ENCODE measurements at regions of chr17 and their contacts with region 1.

Region 1: DNA sequence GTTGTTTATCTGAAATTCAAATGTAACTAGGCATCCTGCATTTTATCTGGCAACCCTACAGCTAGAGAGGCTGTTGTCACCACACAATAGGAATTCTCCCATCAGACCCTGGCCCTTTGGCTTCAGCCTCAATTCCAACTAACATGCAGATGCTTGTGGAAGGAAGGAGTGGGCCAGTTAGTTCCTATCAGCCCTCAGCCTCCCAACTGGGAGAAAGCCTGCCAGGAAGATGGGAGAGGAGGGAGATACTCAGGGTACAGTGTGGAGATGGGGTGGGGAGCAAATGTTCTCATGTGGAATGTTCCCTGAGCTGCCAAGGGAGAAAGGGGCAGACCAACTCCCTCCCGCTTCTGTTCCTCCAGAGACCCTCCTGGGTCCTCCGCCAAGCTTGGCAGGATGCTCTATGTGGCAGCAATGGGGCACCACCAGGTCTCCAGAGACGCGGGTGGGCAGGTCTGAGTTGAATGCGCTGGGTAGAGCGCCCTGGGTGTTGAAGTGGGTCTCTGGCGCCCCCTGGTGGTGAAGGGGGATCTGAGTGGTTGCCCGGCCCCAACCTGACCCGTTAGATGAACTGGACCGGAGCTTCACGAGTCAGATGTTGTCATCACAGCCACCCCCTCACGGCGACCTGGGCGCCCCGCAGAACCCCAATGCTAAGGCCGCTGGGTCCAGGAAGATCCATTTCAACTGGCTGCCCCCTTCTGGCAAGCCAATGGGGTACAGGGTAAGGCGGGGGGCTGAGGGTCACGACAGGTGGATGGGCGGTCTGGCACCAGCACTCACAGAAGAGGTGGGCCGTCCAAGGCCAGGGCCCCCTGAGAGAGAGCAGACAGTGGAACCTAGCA is 15.2 kb downstream of the GALK1 start:
- DNase-seq: peak; percentile 92
- H3K4me3 Mint-ChIP-seq: no peak overlapping the region
- H3K27ac Mint-ChIP-seq: no peak overlapping the region
- H3K4me1 Mint-ChIP-seq: peaks cover 20% of the 10 kb centered on the region
- H3K27me3 Mint-ChIP-seq: peaks cover 33% of the 10 kb centered on the region

Region 2: GRCh38 chr17:75539967-75540711 is 209.6 kb before region 1 on chr17:
- CTCF ChIA-PET with region 1: no interaction called
- DNase-seq: no peak
- H3K4me3 Mint-ChIP-seq: no peak overlapping the region
- H3K27ac Mint-ChIP-seq: no peak overlapping the region
- H3K4me1 Mint-ChIP-seq: peaks cover 13% of the 10 kb centered on the region
- H3K27me3 Mint-ChIP-seq: no peaks in the 10 kb centered on the region

Region 3: GRCh38 chr17:75601057-75602051 is 148.4 kb before region 1 on chr17:
- CTCF ChIA-PET with region 1: interaction called, 53 read pairs
- DNase-seq: peak; percentile 78
- H3K4me3 Mint-ChIP-seq: no peak overlapping the region
- H3K27ac Mint-ChIP-seq: no peak overlapping the region
- H3K4me1 Mint-ChIP-seq: no peaks in the 10 kb centered on the region
- H3K27me3 Mint-ChIP-seq: peaks cover 6% of the 10 kb centered on the region

Region 4: GRCh38 chr17:75632863-75633485 is 116.8 kb before region 1 on chr17 and contains the start of gene SMIM5:
- CTCF ChIA-PET with region 1: interaction called, 380 read pairs
- DNase-seq: peak; percentile 91
- H3K4me3 Mint-ChIP-seq: no peak within 1 kb of the TSS
- H3K27ac Mint-ChIP-seq: no peak within 1 kb of the TSS
- H3K4me1 Mint-ChIP-seq: no peaks in the 10 kb centered on the region
- H3K27me3 Mint-ChIP-seq: no peaks in the 10 kb centered on the region

Region 5: GRCh38 chr17:75673487-75673886 is 76.3 kb before region 1 on chr17:
- CTCF ChIA-PET with region 1: interaction called, 209 read pairs
- DNase-seq: no peak
- H3K4me3 Mint-ChIP-seq: no peak overlapping the region
- H3K27ac Mint-ChIP-seq: no peak overlapping the region
- H3K4me1 Mint-ChIP-seq: peaks cover 20% of the 10 kb centered on the region
- H3K27me3 Mint-ChIP-seq: no peaks in the 10 kb centered on the region

Region 6: DNA sequence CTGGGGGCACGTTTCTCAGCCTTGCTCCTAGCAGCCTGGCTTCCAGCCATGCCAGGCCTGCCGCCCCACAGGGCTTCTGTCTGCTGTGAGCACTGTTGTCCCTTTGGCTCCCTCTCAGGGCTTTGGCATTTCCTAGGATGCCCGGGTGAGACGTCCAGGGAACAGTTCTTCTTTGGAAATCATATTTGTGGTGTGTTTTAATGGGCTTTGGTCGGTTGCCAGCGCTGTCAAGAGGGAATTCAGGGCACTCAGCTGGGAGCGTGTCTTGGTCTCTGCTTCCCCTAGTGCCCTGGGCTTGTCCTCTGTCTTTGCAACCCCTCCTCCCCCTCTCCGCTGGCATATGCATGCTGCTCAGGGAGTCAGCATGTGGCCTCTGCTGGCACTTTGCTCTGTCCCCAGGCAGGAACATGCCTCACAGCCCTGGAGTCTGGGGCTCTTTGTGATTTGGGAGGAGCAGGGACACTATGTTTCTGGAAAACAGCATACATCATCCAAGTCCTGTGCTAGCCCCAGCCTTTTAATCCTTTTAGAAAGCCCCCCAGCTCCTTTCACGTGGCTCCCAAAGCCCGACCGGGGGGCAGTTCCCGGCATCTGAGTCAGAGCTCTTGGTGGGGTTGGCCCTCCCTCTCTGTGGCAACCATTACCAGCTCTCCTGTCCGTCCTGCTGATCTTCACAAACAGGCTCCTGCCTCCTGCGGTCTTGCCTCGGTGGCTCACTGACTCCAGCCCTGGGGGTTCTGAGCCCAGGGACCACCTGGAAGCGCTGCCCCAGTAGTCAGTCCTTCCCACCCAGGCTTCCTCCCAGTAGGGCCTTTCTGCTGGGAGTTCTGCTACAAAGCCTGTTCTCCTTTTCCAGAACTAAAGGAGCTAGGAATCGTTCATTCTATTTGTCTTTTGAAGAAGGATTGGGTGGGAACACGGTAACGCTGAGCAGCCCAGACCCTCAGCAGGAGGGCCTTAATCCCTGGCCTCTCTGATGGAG is 56.0 kb before region 1 on chr17:
- CTCF ChIA-PET with region 1: interaction called, 86 read pairs
- DNase-seq: no peak
- H3K4me3 Mint-ChIP-seq: no peak overlapping the region
- H3K27ac Mint-ChIP-seq: no peak overlapping the region
- H3K4me1 Mint-ChIP-seq: peaks cover 34% of the 10 kb centered on the region
- H3K27me3 Mint-ChIP-seq: no peaks in the 10 kb centered on the region

Region 7: GRCh38 chr17:75764711-75765421 is 15.1 kb after region 1 on chr17 and contains the start of gene GALK1:
- CTCF ChIA-PET with region 1: interaction called, 110 read pairs
- DNase-seq: peak; percentile 82
- H3K4me3 Mint-ChIP-seq: peak within 1 kb of the TSS; percentile 78
- H3K27ac Mint-ChIP-seq: peak within 1 kb of the TSS; percentile 76
- H3K4me1 Mint-ChIP-seq: peaks cover 17% of the 10 kb centered on the region
- H3K27me3 Mint-ChIP-seq: peaks cover 16% of the 10 kb centered on the region

Region 8: GRCh38 chr17:75816674-75817073 is 66.9 kb after region 1 on chr17:
- CTCF ChIA-PET with region 1: no interaction called
- DNase-seq: no peak
- H3K4me3 Mint-ChIP-seq: no peak overlapping the region
- H3K27ac Mint-ChIP-seq: no peak overlapping the region
- H3K4me1 Mint-ChIP-seq: peaks cover 12% of the 10 kb centered on the region
- H3K27me3 Mint-ChIP-seq: no peaks in the 10 kb centered on the region

Measured in activated naive CD4-positive, alpha-beta T cell treated with anti-CD3 and anti-CD28 coated beads, Interleukin-2, amount 10 ng/mL, durations not matched to agents 7 days and 5 days (primary cell).